ENCODE measurements at regions of chr6 and their contacts with region 1.

Region 1: GRCh38 chr6:2999618-3000557 is at the start of gene NQO2:
- DNase-seq: peak; percentile 54 to 91
- H3K4me3 ChIP-seq: peak within 1 kb of the TSS; percentile 86
- H3K27ac ChIP-seq: peak within 1 kb of the TSS; percentile 54
- H3K4me1 ChIP-seq: peaks cover 16% of the 10 kb centered on the region
- H3K27me3 ChIP-seq: no peaks in the 10 kb centered on the region
- CTCF ChIP-seq: no peak
- total RNA-seq, gene NQO2: 79.4 and 82.9 TPM in 2 replicates

Region 2: DNA sequence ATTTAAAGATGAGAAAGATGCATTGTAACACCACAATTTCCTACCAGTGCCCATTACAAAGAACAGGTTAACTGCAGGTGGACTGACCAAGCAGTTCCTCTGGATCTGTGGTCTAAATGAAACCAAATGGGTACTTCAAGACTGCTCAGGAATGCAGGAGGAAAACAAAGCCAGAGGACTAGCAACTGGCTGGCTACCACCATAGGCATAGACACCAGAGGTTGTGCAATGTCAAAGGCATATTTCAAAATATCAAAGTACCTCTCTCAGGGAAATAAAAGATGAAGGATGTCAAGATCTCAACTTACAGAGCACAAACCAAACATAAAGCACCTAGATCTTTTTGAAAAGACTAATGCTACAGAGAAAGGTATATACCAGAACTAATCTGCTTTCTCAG is 819.9 kb before region 1 on chr6:
- CTCF ChIA-PET with region 1: no interaction called
- POLR2A ChIA-PET with region 1: interaction called, 10 read pairs
- intact Hi-C with region 1: no loop called
- DNase-seq: no peak
- H3K4me3 ChIP-seq: no peak overlapping the region
- H3K27ac ChIP-seq: no peak overlapping the region
- H3K4me1 ChIP-seq: no peaks in the 10 kb centered on the region
- H3K27me3 ChIP-seq: no peaks in the 10 kb centered on the region
- CTCF ChIP-seq: no peak

Region 3: GRCh38 chr6:2979819-2980464 is 19.9 kb before region 1 on chr6:
- CTCF ChIA-PET with region 1: no interaction called
- POLR2A ChIA-PET with region 1: interaction called, 21 read pairs
- intact Hi-C with region 1: no loop called
- DNase-seq: peak in 1 of 2 experiments; percentile 52
- H3K4me3 ChIP-seq: no peak overlapping the region
- H3K27ac ChIP-seq: peak overlapping the region; percentile 96
- H3K4me1 ChIP-seq: peaks cover 81% of the 10 kb centered on the region
- H3K27me3 ChIP-seq: no peaks in the 10 kb centered on the region
- CTCF ChIP-seq: no peak

Region 4: GRCh38 chr6:3023663-3024483 is 24.0 kb after region 1 on chr6:
- CTCF ChIA-PET with region 1: interaction called, 9 read pairs
- POLR2A ChIA-PET with region 1: no interaction called
- intact Hi-C with region 1: loop called (anchors 1 kb)
- DNase-seq: peak; percentile 76 to 91
- H3K4me3 ChIP-seq: peak overlapping the region; percentile 89
- H3K27ac ChIP-seq: peak overlapping the region; percentile 94
- H3K4me1 ChIP-seq: peaks cover 16% of the 10 kb centered on the region
- H3K27me3 ChIP-seq: no peaks in the 10 kb centered on the region
- CTCF ChIP-seq: no peak

Region 5: DNA sequence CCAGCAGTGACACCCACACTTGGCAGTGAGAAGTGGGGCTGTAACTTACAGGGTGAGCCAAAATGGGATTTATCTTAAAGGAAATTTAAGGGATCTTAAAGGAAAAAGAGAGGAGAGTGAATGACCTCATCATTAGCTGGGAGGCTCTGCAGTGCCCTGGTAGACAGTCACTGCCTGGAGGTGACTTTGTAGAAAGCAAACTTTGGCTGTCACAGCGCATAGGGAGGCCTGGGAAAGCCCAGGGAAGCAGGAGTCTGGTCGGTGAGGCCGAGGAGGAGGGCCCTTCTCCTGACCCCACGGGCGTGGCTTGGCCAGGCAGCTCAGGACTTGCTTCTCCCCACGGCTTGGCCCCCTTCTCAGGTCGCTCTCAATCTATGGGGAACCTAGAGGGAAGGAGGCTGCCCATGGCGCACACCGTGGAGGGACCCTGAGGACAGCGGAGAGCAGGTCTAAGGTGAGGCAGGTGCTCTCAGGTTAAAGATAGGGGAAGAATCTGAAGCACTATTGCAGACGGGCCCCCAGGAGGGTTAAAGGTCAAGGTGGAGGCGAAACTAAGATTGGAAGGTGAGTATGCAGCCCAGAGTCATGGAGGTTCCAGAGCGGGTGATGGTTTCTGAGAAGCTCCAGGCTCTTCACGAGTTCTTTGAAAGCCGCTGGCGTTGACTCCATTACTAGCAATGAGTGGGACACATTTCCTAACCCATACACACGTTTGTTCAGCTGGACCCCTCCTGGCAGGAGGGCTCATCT is 52.8 kb after region 1 on chr6:
- CTCF ChIA-PET with region 1: interaction called, 11 read pairs
- POLR2A ChIA-PET with region 1: no interaction called
- intact Hi-C with region 1: loop called (anchors 1 kb)
- DNase-seq: no peak
- H3K4me3 ChIP-seq: no peak overlapping the region
- H3K27ac ChIP-seq: no peak overlapping the region
- H3K4me1 ChIP-seq: no peaks in the 10 kb centered on the region
- H3K27me3 ChIP-seq: no peaks in the 10 kb centered on the region
- CTCF ChIP-seq: no peak

Region 6: GRCh38 chr6:3251462-3252314 is 251.8 kb after region 1 on chr6:
- CTCF ChIA-PET with region 1: no interaction called
- POLR2A ChIA-PET with region 1: no interaction called
- intact Hi-C with region 1: loop called (anchors 5 kb)
- DNase-seq: peak; percentile 71 to 89
- H3K4me3 ChIP-seq: peak overlapping the region; percentile 5; the same call in 1 of the 2 replicates
- H3K27ac ChIP-seq: 0 out of 2 replicates have a peak overlapping the region, but pooled peaks have one; percentile 40
- H3K4me1 ChIP-seq: peaks cover 15% of the 10 kb centered on the region
- H3K27me3 ChIP-seq: no peaks in the 10 kb centered on the region
- CTCF ChIP-seq: peak; percentile 93

Region 7: DNA sequence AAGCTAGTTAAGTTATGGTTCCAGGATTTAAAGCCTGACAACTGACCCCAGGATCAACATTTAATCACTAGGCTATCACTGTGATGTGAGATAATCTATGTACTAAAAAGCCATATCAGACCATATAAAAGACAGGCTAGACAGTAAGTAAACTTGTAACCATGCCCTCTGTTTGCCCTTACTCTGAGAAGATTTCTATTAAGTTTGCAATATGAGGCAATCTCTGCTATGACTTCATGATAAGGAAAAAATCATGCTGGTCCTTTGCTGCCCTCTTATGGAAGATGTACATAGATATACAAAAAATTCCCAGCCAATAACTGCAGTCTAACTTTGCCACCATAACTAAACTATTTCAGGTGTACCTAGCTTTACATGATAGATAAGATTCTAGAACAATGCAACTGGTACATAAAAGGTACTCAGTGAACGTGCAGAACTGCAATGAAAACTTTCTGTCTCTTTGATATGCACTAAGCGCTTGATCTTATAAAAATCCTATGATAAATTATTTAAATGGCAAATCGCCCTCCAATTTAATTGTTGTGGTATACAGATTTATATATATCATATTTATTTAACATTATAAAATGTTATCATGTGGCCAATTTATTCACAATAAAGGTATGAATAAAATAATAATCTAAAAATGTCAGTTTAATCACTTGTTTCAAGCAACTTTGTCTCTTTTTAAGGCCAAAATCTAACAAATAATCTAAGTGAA is 1008.6 kb after region 1 on chr6:
- CTCF ChIA-PET with region 1: no interaction called
- POLR2A ChIA-PET with region 1: interaction called, 16 read pairs
- intact Hi-C with region 1: no loop called
- DNase-seq: peak in 1 of 2 experiments; percentile 75
- H3K4me3 ChIP-seq: no peak overlapping the region
- H3K27ac ChIP-seq: peak overlapping the region; percentile 54
- H3K4me1 ChIP-seq: peaks cover 5% of the 10 kb centered on the region
- H3K27me3 ChIP-seq: no peaks in the 10 kb centered on the region
- CTCF ChIP-seq: peak; percentile 70

Measured in PC-9 (cell line).